OCI-LY7 (cell line): ENCODE measurements at regions of chr22 and their contacts with region 1.

Region 1: DNA sequence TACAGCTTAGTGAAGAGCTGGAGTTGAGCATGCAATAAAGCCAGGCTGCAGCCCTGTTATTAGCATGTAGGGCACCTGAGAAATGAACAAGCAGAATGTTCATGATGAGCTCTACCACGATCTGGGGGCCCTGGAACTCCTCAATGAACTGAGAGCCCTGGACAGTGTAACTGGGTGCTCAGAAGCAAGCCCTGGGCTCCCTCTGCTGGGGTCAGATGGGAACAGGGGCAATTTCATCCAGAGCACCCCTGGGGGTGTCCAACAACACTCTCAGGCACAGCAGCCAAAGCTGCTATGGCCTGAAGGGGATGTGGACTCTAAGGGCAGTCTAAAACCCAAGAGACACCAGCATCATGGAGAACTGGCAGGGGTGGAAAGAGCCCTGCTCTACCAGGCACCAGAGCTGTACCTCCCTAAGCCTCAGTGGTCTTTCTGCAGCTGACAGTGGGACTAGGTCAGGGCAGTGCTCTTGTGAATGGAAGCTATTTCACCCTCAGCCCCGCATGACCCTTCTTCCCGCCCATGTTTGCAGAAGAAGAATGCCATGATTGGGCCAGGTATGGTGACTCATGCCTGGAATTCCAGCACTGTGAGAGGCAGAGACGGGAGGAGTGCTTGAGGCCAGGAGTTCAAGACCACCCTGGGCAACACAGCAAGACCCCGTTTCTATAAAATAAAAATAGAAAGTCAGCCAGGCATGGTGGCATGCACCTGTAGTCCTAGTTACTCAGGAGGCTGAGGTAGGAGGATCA is 28.9 kb downstream of the THOC5 start:
- DNase-seq: peak; percentile 60
- H3K4me3 ChIP-seq: no peak overlapping the region
- H3K27ac ChIP-seq: no peak overlapping the region
- H3K4me1 ChIP-seq: peaks cover 3% of the 10 kb centered on the region
- CTCF ChIP-seq: peak; percentile 77

Region 2: GRCh38 chr22:29306175-29306834 is 218.3 kb before region 1 on chr22 and contains the start of gene GAS2L1:
- CTCF ChIA-PET with region 1: no interaction called
- POLR2A ChIA-PET with region 1: no interaction called
- intact Hi-C with region 1: loop called (anchors 10 kb)
- DNase-seq: peak; percentile 55
- H3K4me3 ChIP-seq: no peak within 1 kb of the TSS
- H3K27ac ChIP-seq: no peak within 1 kb of the TSS
- H3K4me1 ChIP-seq: peaks cover 8% of the 10 kb centered on the region
- CTCF ChIP-seq: peak; percentile 69
- total RNA-seq, gene GAS2L1: not detected in 2 replicates

Region 3: DNA sequence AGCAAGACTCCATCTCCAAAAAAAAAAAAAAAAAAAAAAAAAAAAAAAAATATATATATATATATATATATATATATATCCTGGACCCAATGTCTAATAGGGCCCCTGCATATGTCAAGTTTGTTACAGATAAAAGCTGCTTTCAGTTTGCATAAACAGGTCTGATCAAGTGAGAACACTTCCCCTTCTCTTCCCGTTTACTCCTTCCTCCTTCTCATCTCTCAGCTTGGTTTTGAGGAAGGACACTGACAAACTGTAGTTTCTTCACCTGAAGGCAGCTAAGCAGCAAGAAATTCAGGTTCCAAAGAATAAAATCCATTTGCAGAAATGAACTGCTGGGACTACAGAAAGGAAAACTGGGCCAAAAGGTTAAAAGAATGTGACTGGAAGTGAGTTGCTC is 17.2 kb after region 1 on chr22:
- CTCF ChIA-PET with region 1: no interaction called
- POLR2A ChIA-PET with region 1: no interaction called
- intact Hi-C with region 1: no loop called
- DNase-seq: no peak
- H3K4me3 ChIP-seq: no peak overlapping the region
- H3K27ac ChIP-seq: no peak overlapping the region
- H3K4me1 ChIP-seq: peaks cover 3% of the 10 kb centered on the region
- CTCF ChIP-seq: no peak